GM12878 (cell line): ENCODE measurements at regions of chr11 and their contacts with region 1.

Region 1: DNA sequence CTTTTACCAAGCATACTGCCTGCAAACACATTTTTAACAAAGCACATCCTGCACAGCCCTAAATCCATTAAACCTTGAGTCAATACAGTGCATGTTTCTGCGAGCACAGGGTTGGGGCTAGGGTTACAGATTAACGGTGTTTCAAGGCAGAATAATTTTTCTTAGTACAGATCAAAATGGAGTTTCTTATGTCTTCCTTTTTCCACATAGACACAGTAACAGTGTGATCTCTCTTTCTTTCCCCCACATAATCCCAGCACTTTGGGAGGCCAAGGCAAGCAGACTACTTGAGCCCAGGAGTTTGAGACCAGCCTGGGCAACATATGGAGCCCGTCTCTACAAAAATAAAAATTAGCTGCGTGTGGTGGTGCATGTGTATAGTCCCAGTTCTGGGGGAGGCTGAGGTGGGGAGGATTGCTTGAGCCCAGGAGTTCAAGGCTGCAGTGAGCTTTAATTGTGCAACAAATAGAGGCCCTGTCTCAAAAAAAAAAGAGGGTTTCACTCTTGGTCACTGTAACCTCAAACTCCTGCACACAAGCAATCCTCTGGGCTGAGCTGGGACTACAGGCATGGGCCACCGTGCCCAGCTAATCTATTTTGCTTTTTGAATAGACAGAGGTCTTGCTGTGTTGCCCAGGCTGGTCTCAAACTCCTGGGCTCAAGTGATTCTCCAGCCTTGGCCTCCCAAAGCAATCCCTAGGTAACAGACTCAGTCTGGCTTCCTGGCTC is 19.7 kb upstream of the SLC3A2 start:
- DNase-seq: no peak
- ATAC-seq: peak; percentile 72
- H3K4me3 ChIP-seq: peak overlapping the region; percentile 28; the same call in 1 of the 2 replicates
- H3K27ac ChIP-seq: peak overlapping the region; percentile 61
- H3K4me1 ChIP-seq: peaks cover 23% of the 10 kb centered on the region
- H3K27me3 ChIP-seq: no peaks in the 10 kb centered on the region
- CTCF ChIP-seq: no peak
- EP300 ChIP-seq: no peak
- POLR2A ChIP-seq: no peak
- RAD21 ChIP-seq: no peak

Region 2: GRCh38 chr11:62621567-62622470 is 239.2 kb before region 1 on chr11 and contains the start of gene B3GAT3:
- CTCF ChIA-PET with region 1: no interaction called
- POLR2A ChIA-PET with region 1: interaction called, 12 read pairs
- RAD21 ChIA-PET with region 1: interaction called, 4 read pairs
- SMC1A ChIA-PET with region 1: interaction called, 3 read pairs
- in situ Hi-C with region 1: no loop called
- intact Hi-C with region 1: no loop called
- DNase-seq: peak; percentile 98
- ATAC-seq: peak; percentile 98
- H3K4me3 ChIP-seq: peak within 1 kb of the TSS; percentile 84
- H3K27ac ChIP-seq: peak within 1 kb of the TSS; percentile 81
- H3K4me1 ChIP-seq: 0 out of 2 replicates have a peak, but pooled peaks cover 4% of the 10 kb centered on the region
- H3K27me3 ChIP-seq: no peaks in the 10 kb centered on the region
- CTCF ChIP-seq: no peak
- EP300 ChIP-seq: peak in 1 of 2 experiments; percentile 27; a peak in 1 of 4 replicates
- POLR2A ChIP-seq: peak; percentile 84
- RAD21 ChIP-seq: no peak
- polyA plus RNA-seq, gene B3GAT3: 0.31 to 2.8 TPM

Region 3: DNA sequence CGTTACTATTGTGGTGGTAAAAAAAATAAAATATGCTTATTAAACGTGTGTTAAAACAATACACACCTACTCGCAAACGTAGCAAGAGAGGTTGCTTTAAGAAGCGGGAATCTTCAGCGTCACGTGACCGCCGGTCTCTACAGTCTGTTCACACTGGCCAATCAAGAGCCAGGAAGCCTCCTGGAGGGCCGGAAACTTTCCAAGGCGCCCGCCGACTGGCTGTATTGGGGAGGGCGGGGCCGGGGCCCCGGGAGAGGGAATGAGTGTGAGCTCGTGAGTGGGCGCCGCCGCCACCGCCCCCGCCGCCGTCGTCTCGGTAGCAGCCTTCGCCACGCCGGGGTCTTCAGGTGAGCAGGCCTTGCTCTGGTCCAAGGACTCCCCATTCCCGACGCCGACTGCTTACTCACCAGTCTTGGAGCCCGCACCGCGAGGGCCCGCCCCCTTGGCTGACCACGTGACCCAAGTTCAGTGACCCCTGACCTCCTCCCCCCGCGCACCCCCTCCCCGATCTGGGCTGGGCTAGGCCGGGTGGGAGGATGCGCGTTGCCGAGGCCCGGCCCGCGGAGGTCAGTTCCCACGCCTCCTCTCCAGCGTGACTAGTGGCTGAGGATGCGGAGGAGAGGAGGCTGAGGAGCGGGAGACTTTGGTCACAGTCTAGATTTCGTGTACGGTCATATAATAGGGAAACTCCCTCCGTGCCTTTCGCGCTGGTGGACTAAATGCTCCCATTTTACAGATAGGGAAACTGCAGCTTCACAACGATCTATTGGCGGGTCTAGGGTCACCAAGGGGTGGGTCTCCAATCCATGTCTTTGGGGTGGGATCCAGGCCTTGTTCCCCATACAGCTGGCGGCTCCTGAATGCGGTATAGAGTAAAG is 89.6 kb before region 1 on chr11 and contains the start of gene TAF6L:
- CTCF ChIA-PET with region 1: interaction called, 31 read pairs
- POLR2A ChIA-PET with region 1: interaction called, 18 read pairs
- RAD21 ChIA-PET with region 1: interaction called, 3 read pairs
- SMC1A ChIA-PET with region 1: interaction called, 7 read pairs
- in situ Hi-C with region 1: no loop called
- intact Hi-C with region 1: no loop called
- DNase-seq: peak; percentile 77
- ATAC-seq: peak; percentile 92
- H3K4me3 ChIP-seq: peak within 1 kb of the TSS; percentile 86
- H3K27ac ChIP-seq: peak within 1 kb of the TSS; percentile 82
- H3K4me1 ChIP-seq: peaks cover 17% of the 10 kb centered on the region
- H3K27me3 ChIP-seq: no peaks in the 10 kb centered on the region
- CTCF ChIP-seq: no peak
- EP300 ChIP-seq: 0 out of 4 replicates have a peak, but pooled peaks of 1 of the 2 experiments have one; percentile 6
- POLR2A ChIP-seq: peak; percentile 83
- RAD21 ChIP-seq: no peak
- polyA plus RNA-seq, gene TAF6L: 0.15 to 0.39 TPM

Region 4: GRCh38 chr11:62841361-62842184 is 19.4 kb before region 1 on chr11:
- CTCF ChIA-PET with region 1: interaction called, 13 read pairs
- POLR2A ChIA-PET with region 1: interaction called, 92 read pairs
- RAD21 ChIA-PET with region 1: interaction called, 31 read pairs
- SMC1A ChIA-PET with region 1: interaction called, 36 read pairs
- in situ Hi-C with region 1: no loop called
- intact Hi-C with region 1: loop called (anchors 1 kb)
- DNase-seq: peak; percentile 100
- ATAC-seq: peak; percentile 83
- H3K4me3 ChIP-seq: peak overlapping the region; percentile 68; the same call in 1 of the 2 replicates
- H3K27ac ChIP-seq: peak overlapping the region; percentile 99
- H3K4me1 ChIP-seq: peaks cover 7% of the 10 kb centered on the region
- H3K27me3 ChIP-seq: no peaks in the 10 kb centered on the region
- CTCF ChIP-seq: peak in 1 of 3 experiments; percentile 21; a peak in 1 of 6 replicates
- EP300 ChIP-seq: peak in 1 of 2 experiments; percentile 72; a peak in 1 of 4 replicates
- POLR2A ChIP-seq: peak; percentile 92
- RAD21 ChIP-seq: no peak

Region 5: GRCh38 chr11:62880803-62881578 is 20.0 kb after region 1 on chr11 and contains the start of gene SLC3A2:
- CTCF ChIA-PET with region 1: interaction called, 38 read pairs
- POLR2A ChIA-PET with region 1: interaction called, 41 read pairs
- RAD21 ChIA-PET with region 1: interaction called, 13 read pairs
- SMC1A ChIA-PET with region 1: interaction called, 8 read pairs
- in situ Hi-C with region 1: no loop called
- intact Hi-C with region 1: no loop called
- DNase-seq: peak; percentile 47
- ATAC-seq: peak; percentile 92
- H3K4me3 ChIP-seq: peak within 1 kb of the TSS; percentile 91
- H3K27ac ChIP-seq: peak within 1 kb of the TSS; percentile 95
- H3K4me1 ChIP-seq: peaks cover 15% of the 10 kb centered on the region
- H3K27me3 ChIP-seq: no peaks in the 10 kb centered on the region
- CTCF ChIP-seq: peak; percentile 64 to 86 (median 83)
- EP300 ChIP-seq: peak in 1 of 2 experiments; percentile 17; a peak in 1 of 4 replicates
- POLR2A ChIP-seq: peak; percentile 94
- RAD21 ChIP-seq: peak; percentile 58
- polyA plus RNA-seq, gene SLC3A2: 6.9 to 17.0 TPM

Region 6: DNA sequence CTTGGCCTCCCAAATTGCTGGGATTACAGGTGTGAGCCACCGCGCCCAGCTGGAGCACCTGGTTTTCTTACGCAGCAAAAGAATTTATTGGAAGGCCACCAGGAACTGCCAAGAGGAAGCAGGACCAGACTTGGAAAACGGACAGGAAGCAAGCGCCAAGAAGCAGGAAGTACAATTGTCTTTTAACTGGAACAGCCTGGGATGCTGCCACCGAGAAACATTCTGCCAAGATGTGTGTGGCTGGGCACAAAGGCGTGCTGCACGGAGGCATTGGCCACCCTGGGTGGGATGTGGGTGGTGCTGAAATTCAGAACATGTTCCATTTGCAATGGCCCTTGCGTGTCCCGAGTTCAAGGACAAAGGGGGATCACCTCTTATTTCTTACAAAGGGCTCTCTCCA is 35.0 kb after region 1 on chr11:
- CTCF ChIA-PET with region 1: no interaction called
- POLR2A ChIA-PET with region 1: no interaction called
- RAD21 ChIA-PET with region 1: no interaction called
- SMC1A ChIA-PET with region 1: no interaction called
- in situ Hi-C with region 1: no loop called
- intact Hi-C with region 1: no loop called
- DNase-seq: no peak
- ATAC-seq: no peak
- H3K4me3 ChIP-seq: no peak overlapping the region
- H3K27ac ChIP-seq: no peak overlapping the region
- H3K4me1 ChIP-seq: no peaks in the 10 kb centered on the region
- H3K27me3 ChIP-seq: no peaks in the 10 kb centered on the region
- CTCF ChIP-seq: no peak
- EP300 ChIP-seq: no peak
- POLR2A ChIP-seq: no peak
- RAD21 ChIP-seq: no peak